ENCODE measurements at regions of chrX and their contacts with region 1.

Region 1: GRCh38 chrX:7147978-7148824 is at the start of gene PUDP:
- DNase-seq: peak; percentile 79
- H3K4me3 Mint-ChIP-seq: peak within 1 kb of the TSS; percentile 79
- H3K27ac Mint-ChIP-seq: peak within 1 kb of the TSS; percentile 86
- H3K4me1 Mint-ChIP-seq: peaks cover 13% of the 10 kb centered on the region
- H3K27me3 Mint-ChIP-seq: no peaks in the 10 kb centered on the region
- total RNA-seq, gene PUDP: 10.7 to 13.6 TPM

Region 2: GRCh38 chrX:7068939-7069371 is 79.2 kb before region 1 on chrX:
- CTCF ChIA-PET with region 1: no interaction called
- intact Hi-C with region 1: loop called (anchors 5 kb)
- DNase-seq: peak; percentile 57
- H3K4me3 Mint-ChIP-seq: no peak overlapping the region
- H3K27ac Mint-ChIP-seq: no peak overlapping the region
- H3K4me1 Mint-ChIP-seq: peaks cover 25% of the 10 kb centered on the region
- H3K27me3 Mint-ChIP-seq: no peaks in the 10 kb centered on the region

Region 3: GRCh38 chrX:7083468-7084396 is 64.5 kb before region 1 on chrX:
- CTCF ChIA-PET with region 1: no interaction called
- intact Hi-C with region 1: loop called (anchors 1 kb)
- DNase-seq: peak; percentile 70
- H3K4me3 Mint-ChIP-seq: peak overlapping the region; percentile 19
- H3K27ac Mint-ChIP-seq: peak overlapping the region; percentile 68
- H3K4me1 Mint-ChIP-seq: peaks cover 44% of the 10 kb centered on the region
- H3K27me3 Mint-ChIP-seq: no peaks in the 10 kb centered on the region

Region 4: DNA sequence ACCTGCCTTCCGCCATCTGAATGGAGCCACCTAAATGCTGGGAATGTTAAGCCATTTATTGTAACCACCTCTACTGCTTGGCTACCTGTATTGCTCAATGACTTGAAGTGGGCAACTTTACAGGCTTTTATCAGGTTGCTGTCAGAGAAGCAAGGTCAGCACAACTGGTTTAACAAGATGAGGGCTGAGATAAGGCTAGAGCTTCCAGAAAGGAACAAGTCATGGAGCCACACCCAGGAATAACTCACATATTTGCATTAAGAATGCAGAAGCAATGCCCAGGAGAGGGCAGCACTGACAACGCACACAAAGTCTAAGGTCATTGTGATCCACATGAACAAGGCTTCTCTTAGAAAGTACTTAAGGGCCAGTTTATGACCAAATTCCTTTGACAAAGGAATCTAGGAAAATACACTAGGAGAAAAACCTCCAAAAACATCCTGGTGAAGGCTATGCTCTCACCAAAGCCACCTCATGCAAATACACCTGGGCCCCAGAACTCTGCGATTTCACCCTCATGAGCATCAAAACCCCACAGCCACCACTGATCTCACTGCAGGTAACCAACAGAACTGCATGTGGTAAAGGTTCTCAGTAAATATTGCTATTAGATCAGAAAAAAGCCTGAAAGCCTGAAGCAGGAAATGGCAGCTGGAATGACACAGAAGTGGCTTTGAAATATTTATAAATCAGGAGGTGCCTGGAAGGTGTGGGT is 15.7 kb before region 1 on chrX:
- CTCF ChIA-PET with region 1: no interaction called
- intact Hi-C with region 1: loop called (anchors 2 kb)
- DNase-seq: peak; percentile 23
- H3K4me3 Mint-ChIP-seq: no peak overlapping the region
- H3K27ac Mint-ChIP-seq: no peak overlapping the region
- H3K4me1 Mint-ChIP-seq: peaks cover 23% of the 10 kb centered on the region
- H3K27me3 Mint-ChIP-seq: no peaks in the 10 kb centered on the region

Region 5: GRCh38 chrX:7925867-7926472 is 777.8 kb after region 1 on chrX:
- CTCF ChIA-PET with region 1: no interaction called
- intact Hi-C with region 1: loop called (anchors 1 kb)
- DNase-seq: peak; percentile 70
- H3K4me3 Mint-ChIP-seq: peak overlapping the region; percentile 38
- H3K27ac Mint-ChIP-seq: no peak overlapping the region
- H3K4me1 Mint-ChIP-seq: peaks cover 11% of the 10 kb centered on the region
- H3K27me3 Mint-ChIP-seq: no peaks in the 10 kb centered on the region

Measured in activated naive CD4-positive, alpha-beta T cell treated with anti-CD3 and anti-CD28 coated beads for 36 hours (primary cell).